Left cardiac atrium (tissue), 4 donors: ENCODE measurements at regions of chr18 and their contacts with region 1.

Region 1: GRCh38 chr18:54269893-54270844 is 852 bp downstream of the POLI start:
- DNase-seq: peak; percentile 63
- ATAC-seq: peak; percentile 41 to 70

Region 2: GRCh38 chr18:54209471-54210180 is 60.5 kb before region 1 on chr18:
- intact Hi-C with region 1: no loop called
- DNase-seq: no peak
- ATAC-seq: no peak

Region 3: DNA sequence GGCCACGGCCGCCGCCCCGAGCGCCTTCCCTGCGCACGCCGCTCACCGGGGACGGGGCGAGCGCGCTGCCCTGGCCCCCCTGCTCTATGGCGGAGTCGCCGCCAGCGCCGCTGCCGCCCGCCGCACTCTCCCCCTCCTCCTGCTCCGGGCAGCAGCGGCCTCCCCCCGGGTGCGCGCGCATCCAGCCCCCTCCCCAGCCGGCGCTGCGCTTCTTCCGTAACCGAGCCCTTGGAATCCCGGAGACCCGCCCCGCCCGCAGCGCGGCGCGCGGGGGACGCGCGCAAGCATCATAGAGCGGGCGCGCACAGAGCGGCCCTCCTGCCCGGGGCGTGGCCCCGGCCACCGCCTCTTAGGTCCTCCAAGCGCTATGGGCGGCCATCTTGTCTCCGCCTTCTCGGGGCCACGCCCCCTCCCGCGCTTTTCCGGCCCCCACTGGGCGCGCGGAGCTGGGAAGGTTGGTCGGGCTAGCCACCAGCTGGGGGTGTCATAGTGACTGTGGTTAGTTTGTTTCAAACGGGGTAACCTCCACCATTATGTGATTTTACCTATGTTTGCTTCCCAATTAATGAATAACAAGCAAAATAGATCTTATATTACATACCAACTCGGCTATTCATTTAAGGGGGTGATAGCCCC is 45.7 kb before region 1 on chr18 and contains the start of gene MBD2:
- intact Hi-C with region 1: loop called in 1 of 2 experiments (anchors 2 kb)
- DNase-seq: peak; percentile 97
- ATAC-seq: peak; percentile 99
- total RNA-seq, gene MBD2: 69.9 to 73.4 TPM

Region 4: DNA sequence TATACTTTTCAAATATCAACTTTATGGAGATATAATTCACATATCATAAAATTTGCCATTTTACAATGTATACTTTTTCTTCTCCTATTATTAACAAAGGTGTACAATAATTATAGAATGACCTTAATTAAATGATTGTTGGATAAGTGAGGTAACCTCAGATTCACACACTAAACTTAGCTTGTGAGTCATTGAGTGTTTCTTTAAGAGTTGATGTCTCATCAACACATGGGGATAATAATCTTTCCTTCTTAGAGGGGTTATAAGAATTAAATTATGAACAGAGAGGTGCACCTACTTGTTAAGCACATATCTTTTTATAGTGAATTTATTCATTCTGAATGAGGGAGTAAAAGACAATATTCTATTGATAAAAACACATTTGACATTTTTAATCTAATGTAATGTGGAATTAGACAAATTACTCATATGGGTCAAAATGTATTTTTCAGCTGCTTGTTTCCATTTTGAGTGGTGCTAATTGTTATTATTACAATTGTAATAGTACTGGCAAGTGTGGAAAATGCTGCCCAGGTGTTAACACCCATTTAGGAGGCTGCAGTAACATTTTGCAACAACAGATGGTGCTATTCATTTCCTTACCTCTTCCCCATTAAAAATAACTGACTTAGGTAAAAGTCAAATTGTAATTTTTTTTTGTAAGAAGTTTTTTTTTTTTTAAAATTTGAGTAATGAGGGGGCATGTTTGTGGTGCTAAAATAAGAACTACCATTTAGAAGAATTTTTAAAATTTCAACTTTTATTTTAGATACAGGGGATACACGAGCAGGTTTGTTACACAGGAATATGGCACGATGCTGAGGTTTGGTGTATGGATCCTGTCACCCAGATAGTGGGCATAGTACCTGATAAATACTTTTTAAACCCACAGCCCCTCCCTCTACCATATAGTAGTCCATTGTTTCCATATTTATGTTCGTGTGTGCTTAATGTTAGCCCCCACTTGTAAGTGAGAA is 288.7 kb after region 1 on chr18:
- intact Hi-C with region 1: no loop called
- DNase-seq: no peak
- ATAC-seq: no peak